Calu3 (cell line): ENCODE measurements at regions of chr4 and their contacts with region 1.

Region 1: DNA sequence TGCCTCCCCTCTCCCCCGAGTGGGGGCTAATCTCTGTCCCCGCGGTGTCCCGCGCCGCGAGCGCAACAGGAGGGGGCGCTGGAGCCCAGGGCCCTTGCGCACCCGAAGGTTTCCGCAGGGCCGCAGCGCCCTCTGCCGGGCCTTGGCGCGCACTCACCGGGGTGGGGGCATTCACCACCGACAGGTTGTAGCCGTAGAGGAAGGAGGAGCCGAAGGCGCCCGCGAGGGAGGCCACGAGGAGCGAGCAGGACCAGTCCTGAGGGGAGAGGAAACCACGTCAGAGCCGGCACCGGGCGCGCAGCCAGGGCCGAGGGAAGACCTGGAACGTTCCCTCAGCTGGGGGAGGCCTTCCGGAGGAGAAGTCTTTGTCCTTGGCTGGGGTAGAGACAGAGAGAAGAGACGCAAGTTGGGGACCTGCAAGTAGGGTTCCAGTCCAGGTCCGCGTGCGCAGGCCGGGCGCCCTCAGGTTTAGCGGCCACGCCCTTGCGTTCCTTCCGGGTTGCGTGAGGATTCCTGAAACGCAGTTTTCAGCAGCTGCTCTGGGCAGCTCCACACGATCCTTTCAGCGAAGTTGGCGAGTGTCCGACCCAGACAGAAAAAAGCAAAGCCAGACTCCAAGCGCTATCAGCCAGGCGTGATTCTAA is 2.4 kb downstream of the SLC2A9 start:
- DNase-seq: peak; percentile 90
- H3K4me3 Mint-ChIP-seq: peak overlapping the region; percentile 81
- H3K27ac Mint-ChIP-seq: peak overlapping the region; percentile 74
- H3K4me1 Mint-ChIP-seq: no peaks in the 10 kb centered on the region
- H3K27me3 Mint-ChIP-seq: peaks cover 6% of the 10 kb centered on the region
- CTCF ChIP-seq: peak; percentile 82

Region 2: GRCh38 chr4:10063544-10064300 is 44.8 kb after region 1 on chr4:
- CTCF ChIA-PET with region 1: interaction called, 4 read pairs
- intact Hi-C with region 1: loop called (anchors 5 kb)
- DNase-seq: peak; percentile 16
- H3K4me3 Mint-ChIP-seq: no peak overlapping the region
- H3K27ac Mint-ChIP-seq: no peak overlapping the region
- H3K4me1 Mint-ChIP-seq: no peaks in the 10 kb centered on the region
- H3K27me3 Mint-ChIP-seq: no peaks in the 10 kb centered on the region
- CTCF ChIP-seq: no peak

Region 3: DNA sequence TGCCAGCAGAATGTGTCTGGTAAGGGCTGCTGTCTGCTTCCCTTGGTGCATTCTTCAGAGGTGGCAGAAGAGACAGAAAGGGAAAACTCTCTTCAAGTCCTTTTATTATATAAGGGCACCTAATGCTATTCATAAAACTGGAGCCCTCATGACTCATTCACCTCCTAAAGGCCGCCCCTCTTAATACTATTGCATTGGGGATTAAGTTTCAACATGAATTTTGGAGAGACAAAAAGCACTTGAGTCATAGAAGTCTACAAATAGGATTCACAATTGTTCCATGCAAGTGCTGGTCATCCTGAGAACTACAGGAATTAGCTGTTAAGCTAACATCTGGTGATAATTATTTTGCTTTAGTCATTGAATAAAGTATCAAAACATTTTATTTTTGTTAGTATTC is 1060.2 kb after region 1 on chr4:
- CTCF ChIA-PET with region 1: no interaction called
- intact Hi-C with region 1: no loop called
- DNase-seq: no peak
- H3K4me3 Mint-ChIP-seq: no peak overlapping the region
- H3K27ac Mint-ChIP-seq: no peak overlapping the region
- H3K4me1 Mint-ChIP-seq: no peaks in the 10 kb centered on the region
- H3K27me3 Mint-ChIP-seq: no peaks in the 10 kb centered on the region
- CTCF ChIP-seq: no peak